PC-9 (cell line): ENCODE measurements at regions of chr5 and their contacts with region 1.

Region 1: GRCh38 chr5:150000256-150000989 is at the starts of genes HMGXB3 and TIGD6:
- DNase-seq: peak; percentile 87 to 97
- H3K4me3 ChIP-seq: peak within 1 kb of the TSS; percentile 92
- H3K27ac ChIP-seq: peak within 1 kb of the TSS; percentile 86
- H3K4me1 ChIP-seq: peaks cover 25% of the 10 kb centered on the region
- H3K27me3 ChIP-seq: no peaks in the 10 kb centered on the region
- CTCF ChIP-seq: no peak
- total RNA-seq, gene HMGXB3: 38.0 and 43.1 TPM in 2 replicates
- total RNA-seq, gene TIGD6: 3.0 and 3.9 TPM in 2 replicates

Region 2: DNA sequence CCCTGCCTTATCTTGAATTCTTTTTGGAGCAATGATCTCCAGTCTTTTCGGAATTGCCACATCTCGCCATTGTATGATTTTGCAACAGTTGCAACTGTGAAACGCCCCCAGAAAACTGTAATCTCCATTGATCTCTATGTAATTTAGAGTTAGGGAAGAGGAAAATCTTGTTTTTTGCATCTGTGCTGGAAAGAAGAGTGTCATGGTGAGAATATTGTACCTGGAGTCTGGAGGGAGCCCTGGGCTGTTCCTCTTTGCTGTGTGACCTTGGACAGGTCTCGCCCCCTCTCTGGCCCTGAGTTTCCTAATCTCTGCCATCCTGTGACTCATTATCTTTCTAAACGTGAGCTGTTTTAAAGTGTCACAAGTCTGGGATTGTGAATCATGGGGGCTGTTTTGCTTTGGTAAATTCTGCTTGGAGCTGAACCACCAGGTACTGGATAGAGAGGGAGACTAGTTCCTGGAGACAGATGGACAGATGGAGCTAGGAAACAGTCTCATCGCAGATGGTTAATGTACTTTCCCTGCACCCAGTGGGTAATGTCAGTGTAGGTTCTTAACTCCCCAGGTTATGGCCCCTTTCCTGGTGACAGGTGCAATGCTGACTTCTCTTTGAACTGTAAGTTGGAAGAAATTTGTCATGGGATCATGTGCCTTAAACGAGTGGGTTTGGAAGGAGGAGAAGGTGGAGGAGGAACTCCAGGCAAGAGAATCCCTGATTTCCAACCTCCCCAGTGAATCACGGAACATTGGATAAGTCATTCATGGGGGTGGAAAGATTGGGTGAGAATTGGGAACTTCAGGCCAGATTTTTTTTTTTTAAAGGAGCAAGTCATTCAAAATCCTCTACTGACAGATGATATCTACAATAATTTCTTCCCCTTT is 250.7 kb before region 1 on chr5:
- CTCF ChIA-PET with region 1: no interaction called
- POLR2A ChIA-PET with region 1: no interaction called
- intact Hi-C with region 1: loop called (anchors 10 kb)
- DNase-seq: peak in 1 of 2 experiments; percentile 48
- H3K4me3 ChIP-seq: no peak overlapping the region
- H3K27ac ChIP-seq: peak overlapping the region; percentile 24
- H3K4me1 ChIP-seq: peaks cover 59% of the 10 kb centered on the region
- H3K27me3 ChIP-seq: no peaks in the 10 kb centered on the region
- CTCF ChIP-seq: no peak

Region 3: DNA sequence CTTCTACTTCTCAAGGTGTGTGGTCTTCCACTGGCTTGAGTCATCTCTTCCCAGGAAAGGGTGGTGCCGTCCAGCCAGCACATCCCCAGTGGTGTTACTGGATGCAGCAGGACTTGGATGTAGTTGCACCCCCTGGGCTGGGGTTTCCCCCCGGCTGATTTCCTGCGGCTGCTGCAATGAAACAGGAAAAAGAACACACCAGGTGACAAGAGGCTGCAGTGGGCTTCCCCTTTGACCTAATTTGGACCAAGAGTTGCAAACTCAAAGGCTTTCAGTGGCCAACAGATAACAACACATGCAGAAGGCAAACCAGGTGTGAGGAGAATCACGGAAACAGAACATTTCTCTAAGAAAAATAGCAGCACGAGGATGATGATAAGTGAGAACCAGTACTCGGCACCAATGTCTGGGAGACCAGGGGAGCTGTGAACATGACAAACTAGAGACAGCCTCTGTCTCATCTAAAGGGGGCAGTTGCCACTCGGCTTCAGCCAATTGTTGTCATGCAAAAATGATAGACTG is 139.6 kb before region 1 on chr5:
- CTCF ChIA-PET with region 1: no interaction called
- POLR2A ChIA-PET with region 1: interaction called, 19 read pairs
- intact Hi-C with region 1: no loop called
- DNase-seq: no peak
- H3K4me3 ChIP-seq: no peak overlapping the region
- H3K27ac ChIP-seq: no peak overlapping the region
- H3K4me1 ChIP-seq: no peaks in the 10 kb centered on the region
- H3K27me3 ChIP-seq: no peaks in the 10 kb centered on the region
- CTCF ChIP-seq: no peak

Region 4: DNA sequence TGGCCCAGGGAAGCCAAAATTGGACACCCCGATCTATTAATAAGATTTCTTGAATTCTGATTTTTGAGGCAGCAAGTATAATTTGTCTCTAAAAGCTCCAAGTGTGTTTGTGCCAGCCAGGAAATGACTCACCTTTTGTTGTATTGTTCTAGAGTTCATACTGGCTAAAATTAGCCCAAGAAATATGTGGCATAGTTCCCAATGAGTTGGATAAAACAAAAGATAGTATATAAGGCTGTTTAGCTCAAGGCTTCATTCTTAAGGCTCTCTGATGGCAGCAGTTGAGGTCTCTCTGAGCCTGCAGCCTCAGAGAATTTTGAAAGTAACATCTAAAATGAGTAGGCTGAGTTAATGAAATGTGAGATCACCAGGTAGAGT is 21.7 kb after region 1 on chr5:
- CTCF ChIA-PET with region 1: no interaction called
- POLR2A ChIA-PET with region 1: interaction called, 7 read pairs
- intact Hi-C with region 1: loop called (anchors 1 kb)
- DNase-seq: peak; percentile 53 to 91
- H3K4me3 ChIP-seq: peak overlapping the region; percentile 33; the same call in 1 of the 2 replicates
- H3K27ac ChIP-seq: peak overlapping the region; percentile 93
- H3K4me1 ChIP-seq: peaks cover 59% of the 10 kb centered on the region
- H3K27me3 ChIP-seq: no peaks in the 10 kb centered on the region
- CTCF ChIP-seq: no peak

Region 5: DNA sequence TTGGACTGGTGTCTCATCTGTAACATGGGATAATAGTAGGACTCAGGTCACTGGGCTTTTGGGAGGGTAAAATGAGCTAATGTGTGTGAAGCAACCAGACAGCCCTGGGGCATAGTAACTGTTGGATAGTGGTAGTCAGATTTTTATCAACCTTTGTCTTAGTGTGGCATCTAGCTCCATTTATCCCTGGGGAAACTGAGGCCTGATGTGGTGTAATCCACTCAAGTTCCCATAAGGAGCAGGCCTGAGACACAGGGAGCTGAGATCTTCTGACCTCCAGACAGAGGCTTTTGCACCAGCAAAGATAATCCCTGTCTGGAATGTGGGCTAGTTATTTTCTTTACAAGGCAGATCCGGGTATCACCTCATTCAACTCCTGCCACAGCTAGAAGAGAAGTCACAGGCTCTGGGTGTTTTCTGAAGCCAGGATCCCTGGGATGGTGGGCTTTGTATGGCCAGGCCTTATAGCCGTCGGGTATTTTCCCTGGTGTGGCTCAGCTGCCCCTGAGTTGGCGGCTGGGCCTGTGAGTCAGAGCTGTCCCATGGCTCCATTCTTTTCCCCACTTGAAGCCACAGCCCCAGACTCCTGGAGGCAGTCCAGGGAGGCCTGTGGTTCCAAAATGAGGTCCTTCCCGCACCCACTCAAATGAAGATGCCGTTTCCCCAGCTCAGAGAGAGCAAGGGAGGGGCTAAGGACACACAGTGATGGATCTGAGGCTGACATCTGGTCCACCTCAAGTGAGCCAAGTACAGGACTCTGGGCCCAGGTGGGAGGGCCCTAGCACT is 112.0 kb after region 1 on chr5:
- CTCF ChIA-PET with region 1: no interaction called
- POLR2A ChIA-PET with region 1: no interaction called
- intact Hi-C with region 1: loop called (anchors 2 kb)
- DNase-seq: peak; percentile 72 to 76
- H3K4me3 ChIP-seq: no peak overlapping the region
- H3K27ac ChIP-seq: peak overlapping the region; percentile 80
- H3K4me1 ChIP-seq: peaks cover 51% of the 10 kb centered on the region
- H3K27me3 ChIP-seq: no peaks in the 10 kb centered on the region
- CTCF ChIP-seq: no peak

Region 6: GRCh38 chr5:150122158-150122510 is 121.7 kb after region 1 on chr5:
- CTCF ChIA-PET with region 1: interaction called, 3 read pairs
- POLR2A ChIA-PET with region 1: no interaction called
- intact Hi-C with region 1: loop called (anchors 1 kb)
- DNase-seq: peak in 1 of 2 experiments; percentile 57
- H3K4me3 ChIP-seq: no peak overlapping the region
- H3K27ac ChIP-seq: no peak overlapping the region
- H3K4me1 ChIP-seq: peaks cover 7% of the 10 kb centered on the region
- H3K27me3 ChIP-seq: no peaks in the 10 kb centered on the region
- CTCF ChIP-seq: peak; percentile 68

Region 7: DNA sequence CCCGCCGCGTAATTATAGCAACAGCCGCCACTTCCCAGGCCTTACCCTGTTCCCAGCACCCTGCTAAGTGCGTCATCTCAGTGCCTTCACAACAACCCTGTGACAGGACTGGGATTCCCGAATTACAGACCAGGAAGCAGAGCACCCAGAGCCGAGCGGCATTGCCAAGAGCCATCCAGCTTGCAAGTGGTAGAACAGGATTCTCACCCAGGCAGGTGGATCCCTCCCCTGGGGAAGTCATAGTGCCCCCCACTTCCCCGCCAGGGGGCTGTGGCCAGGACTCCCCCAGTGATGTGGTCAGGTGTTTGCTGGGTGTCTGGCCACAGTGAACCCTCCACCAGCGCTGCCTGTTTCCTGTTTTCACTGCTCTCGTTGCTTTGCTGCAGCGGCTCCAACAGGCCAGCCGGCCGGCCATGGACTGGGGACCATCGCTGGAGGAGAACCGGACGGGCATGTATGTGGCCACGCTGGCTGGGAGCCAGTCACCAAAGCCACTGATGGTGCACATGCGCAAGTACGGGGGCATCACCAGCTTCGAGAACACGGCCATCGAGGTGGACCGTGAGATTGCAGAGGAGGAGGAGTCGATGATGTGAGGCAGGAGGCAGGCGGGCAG is 208.7 kb after region 1 on chr5:
- CTCF ChIA-PET with region 1: no interaction called
- POLR2A ChIA-PET with region 1: no interaction called
- intact Hi-C with region 1: loop called (anchors 2 kb)
- DNase-seq: peak; percentile 83 to 84
- H3K4me3 ChIP-seq: peak overlapping the region; percentile 29; the same call in 1 of the 2 replicates
- H3K27ac ChIP-seq: peak overlapping the region; percentile 50
- H3K4me1 ChIP-seq: peaks cover 22% of the 10 kb centered on the region
- H3K27me3 ChIP-seq: no peaks in the 10 kb centered on the region
- CTCF ChIP-seq: no peak

Region 8: DNA sequence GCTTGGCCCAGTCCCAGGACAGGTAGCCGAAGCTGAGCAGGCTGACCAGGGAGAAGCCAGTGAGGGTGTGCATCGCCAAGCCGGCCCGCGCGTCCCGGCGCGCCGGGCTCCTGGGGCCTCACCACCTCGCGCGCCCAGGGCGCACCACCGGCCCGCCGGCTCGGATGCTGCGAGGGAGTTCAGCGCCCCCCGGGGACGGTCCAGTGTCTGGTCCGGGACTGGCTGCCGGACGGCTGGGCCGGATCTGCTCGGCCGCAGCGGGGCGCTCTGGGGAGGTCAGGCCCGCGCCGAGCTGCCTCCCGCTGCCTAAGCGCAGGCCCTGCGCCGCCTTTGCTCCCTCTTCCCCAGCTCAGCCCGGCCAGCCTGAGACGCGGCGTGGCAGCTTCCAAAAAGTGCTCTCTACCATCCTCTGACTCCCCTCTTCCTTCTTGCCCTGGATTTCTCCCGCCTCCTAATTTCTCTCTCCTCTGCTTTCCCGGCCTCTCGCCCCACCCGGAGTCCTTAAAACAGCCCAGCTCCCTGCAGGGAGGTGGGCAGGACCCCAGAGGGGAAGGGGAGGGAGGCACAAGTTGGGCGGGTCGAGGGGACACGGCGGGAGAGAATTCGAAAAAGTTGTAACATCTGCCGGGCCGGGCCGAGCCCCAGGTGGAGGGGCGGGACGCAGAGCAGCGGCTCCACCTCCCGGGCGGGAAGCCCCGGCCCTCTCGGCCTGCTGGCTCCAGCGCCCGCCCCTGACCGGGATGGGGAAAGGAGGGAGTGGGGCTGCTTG is 302.1 kb after region 1 on chr5 and contains the start of gene ARSI:
- CTCF ChIA-PET with region 1: no interaction called
- POLR2A ChIA-PET with region 1: no interaction called
- intact Hi-C with region 1: no loop called
- DNase-seq: peak in 1 of 2 experiments; percentile 56
- H3K4me3 ChIP-seq: peak within 1 kb of the TSS; percentile 40; the same call in 1 of the 2 replicates
- H3K27ac ChIP-seq: no peak within 1 kb of the TSS
- H3K4me1 ChIP-seq: peaks cover 15% of the 10 kb centered on the region
- H3K27me3 ChIP-seq: no peaks in the 10 kb centered on the region
- CTCF ChIP-seq: no peak
- total RNA-seq, gene ARSI: 2.6 and 3.2 TPM in 2 replicates